K562 (cell line): ENCODE measurements at regions of chr6 and their contacts with region 1.

Region 1: DNA sequence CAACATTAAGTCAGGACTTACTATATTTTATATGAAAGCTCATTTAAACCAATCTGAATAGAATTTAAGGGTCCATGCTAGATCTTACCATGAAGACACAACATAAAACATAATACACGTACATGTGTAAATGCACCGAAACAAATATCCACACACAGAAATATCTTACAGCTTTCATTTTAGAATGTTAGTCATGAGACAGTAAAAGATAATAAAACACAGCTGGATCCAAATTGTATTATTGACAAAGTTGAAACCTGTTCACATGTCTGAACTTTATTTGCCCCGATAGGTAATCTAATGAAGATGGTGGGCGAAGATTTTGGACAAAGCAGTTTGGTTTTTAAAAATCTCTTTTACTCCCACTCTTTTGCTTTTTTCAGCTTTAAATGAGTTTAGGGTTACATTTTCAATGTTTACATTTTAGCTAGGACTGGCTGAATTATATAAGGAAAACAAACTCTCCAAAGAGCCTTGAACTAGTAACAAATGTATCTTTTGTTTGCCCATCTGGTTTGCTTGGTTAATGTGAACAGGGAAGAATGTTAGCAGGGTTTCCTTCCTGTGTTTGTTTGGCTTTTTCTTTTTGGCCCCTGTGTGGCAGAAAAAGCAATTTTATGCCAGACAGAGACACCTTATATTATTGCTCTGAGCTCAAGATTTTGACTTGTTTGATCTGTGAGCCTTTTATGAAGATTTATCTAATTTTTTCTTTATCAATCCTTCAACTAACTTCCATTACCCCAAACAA is 5.1 kb upstream of the TMEM181 start:
- DNase-seq: no peak
- ATAC-seq: no peak
- H3K4me3 ChIP-seq: no peak overlapping the region
- H3K27ac ChIP-seq: no peak overlapping the region
- H3K4me1 ChIP-seq: peaks cover 10 to 19% of the 10 kb centered on the region in 2 experiments
- H3K27me3 ChIP-seq: no peaks in the 10 kb centered on the region
- CTCF ChIP-seq: no peak
- EP300 ChIP-seq: no peak
- POLR2A ChIP-seq: no peak
- RAD21 ChIP-seq: no peak

Region 2: GRCh38 chr6:158417760-158418098 is 137.1 kb before region 1 on chr6:
- CTCF ChIA-PET with region 1: no interaction called
- POLR2A ChIA-PET with region 1: no interaction called
- in situ Hi-C with region 1: no loop called
- intact Hi-C with region 1: no loop called
- DNase-seq: no peak
- ATAC-seq: no peak
- H3K4me3 ChIP-seq: no peak overlapping the region
- H3K27ac ChIP-seq: no peak overlapping the region
- H3K4me1 ChIP-seq: no peaks in the 10 kb centered on the region
- H3K27me3 ChIP-seq: no peaks in the 10 kb centered on the region
- CTCF ChIP-seq: no peak
- EP300 ChIP-seq: no peak
- POLR2A ChIP-seq: no peak
- RAD21 ChIP-seq: no peak

Region 3: DNA sequence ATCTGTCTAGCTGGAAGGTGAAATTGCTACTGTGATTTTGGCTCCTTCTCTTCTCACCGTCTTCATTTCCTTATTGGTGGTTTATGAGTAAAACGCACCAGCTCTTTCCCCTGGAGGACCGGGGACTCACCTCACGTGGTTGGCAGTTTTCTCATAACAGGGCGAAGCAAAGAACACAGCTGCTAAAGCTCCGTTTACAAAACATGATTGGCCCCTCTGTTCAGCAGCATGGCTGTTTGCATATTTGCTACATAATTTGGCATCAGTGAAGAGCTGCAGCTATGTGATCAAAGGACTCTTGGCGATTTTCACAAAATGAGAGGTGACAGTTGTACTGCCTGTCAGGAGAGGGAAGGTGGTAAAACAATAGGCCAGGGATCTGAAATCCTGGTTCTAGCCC is 15.4 kb before region 1 on chr6:
- CTCF ChIA-PET with region 1: no interaction called
- POLR2A ChIA-PET with region 1: interaction called, 10 read pairs
- in situ Hi-C with region 1: no loop called
- intact Hi-C with region 1: no loop called
- DNase-seq: no peak
- ATAC-seq: no peak
- H3K4me3 ChIP-seq: no peak overlapping the region
- H3K27ac ChIP-seq: no peak overlapping the region
- H3K4me1 ChIP-seq: peaks cover 0 to 17% of the 10 kb centered on the region in 2 experiments; a peak in 4 of 5 replicates
- H3K27me3 ChIP-seq: peaks cover 54 to 66% of the 10 kb centered on the region in 2 experiments
- CTCF ChIP-seq: no peak
- EP300 ChIP-seq: no peak
- POLR2A ChIP-seq: no peak
- RAD21 ChIP-seq: no peak

Region 4: DNA sequence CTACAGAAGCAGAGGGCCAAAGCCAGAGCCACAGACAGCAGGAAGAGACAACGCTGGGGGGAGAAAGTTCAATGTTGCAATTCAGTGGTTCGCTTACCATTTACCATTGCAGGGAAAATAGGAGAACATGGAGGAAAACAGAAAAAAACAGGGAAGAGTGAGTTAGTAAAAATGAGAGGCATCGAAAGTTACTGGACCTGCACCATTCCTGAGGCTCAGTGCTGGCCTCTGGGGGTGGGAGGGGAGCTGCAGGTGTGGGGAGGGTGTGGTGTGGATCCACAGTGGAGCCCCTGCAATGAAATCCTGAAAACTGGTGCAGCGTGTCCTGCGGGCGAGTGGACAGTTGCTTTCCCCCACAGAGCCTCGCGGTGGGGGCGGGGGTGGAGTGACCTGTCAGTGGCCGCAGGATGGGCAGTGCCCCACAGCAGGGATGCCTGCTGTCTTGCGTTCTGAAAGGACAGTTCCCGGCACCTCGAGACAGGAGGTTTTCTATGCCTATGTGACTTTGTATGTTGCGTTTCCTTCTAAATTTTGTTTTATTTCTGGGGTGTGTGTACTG is 10.8 kb after region 1 on chr6:
- CTCF ChIA-PET with region 1: no interaction called
- POLR2A ChIA-PET with region 1: interaction called, 14 read pairs
- in situ Hi-C with region 1: no loop called
- intact Hi-C with region 1: no loop called
- DNase-seq: no peak
- ATAC-seq: no peak
- H3K4me3 ChIP-seq: no peak overlapping the region
- H3K27ac ChIP-seq: no peak overlapping the region
- H3K4me1 ChIP-seq: peaks cover 30 to 46% of the 10 kb centered on the region in 2 experiments
- H3K27me3 ChIP-seq: no peaks in the 10 kb centered on the region
- CTCF ChIP-seq: peak; percentile 24 to 44 (median 40); a peak in 4 of 6 replicates
- EP300 ChIP-seq: no peak
- POLR2A ChIP-seq: no peak
- RAD21 ChIP-seq: no peak